ENCODE measurements at regions of chr6 and their contacts with region 1.

Region 1: GRCh38 chr6:132300323-132300949 is 100.8 kb downstream of the MOXD1 start:
- DNase-seq: peak; percentile 18 to 44
- H3K4me3 ChIP-seq: no peak overlapping the region
- H3K27ac ChIP-seq: no peak overlapping the region
- H3K4me1 ChIP-seq: no peaks in the 10 kb centered on the region
- H3K27me3 ChIP-seq: no peaks in the 10 kb centered on the region
- CTCF ChIP-seq: peak; percentile 90

Region 2: DNA sequence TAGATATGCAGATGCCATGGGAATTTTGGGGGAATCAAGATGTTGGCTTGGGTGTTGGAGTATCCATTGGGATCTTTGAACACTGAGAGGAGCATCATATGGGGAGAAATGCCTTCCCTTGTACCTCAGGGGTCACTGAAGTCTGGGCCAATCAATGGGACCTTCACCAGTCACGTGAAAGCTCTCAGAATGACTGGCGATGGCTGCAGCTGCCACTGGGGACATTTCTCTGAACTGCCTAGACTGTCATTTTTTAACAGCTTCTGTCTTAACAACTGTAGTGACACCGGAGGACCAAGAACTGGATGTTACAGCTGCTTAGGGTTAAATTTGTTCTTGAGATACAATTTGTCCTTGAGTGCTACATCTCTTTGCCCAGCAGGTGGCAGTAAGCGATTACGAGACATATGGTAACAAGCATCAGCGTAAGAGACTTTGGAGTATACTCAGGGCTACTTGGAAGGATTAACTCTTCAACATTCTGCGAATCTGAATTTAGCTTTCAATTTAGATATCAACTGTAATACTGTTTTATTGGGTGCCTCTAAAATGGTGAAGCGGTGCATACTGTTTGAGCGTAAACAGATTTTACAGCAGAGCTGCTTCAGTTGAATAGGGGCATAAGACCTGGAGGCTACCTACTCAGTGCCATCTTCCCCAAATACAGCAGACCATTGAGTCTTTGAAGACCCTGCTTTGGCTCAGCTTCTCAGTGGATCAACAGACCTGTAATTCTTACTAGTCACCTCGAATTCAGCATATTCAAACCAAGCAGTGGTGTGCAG is 385.3 kb before region 1 on chr6:
- CTCF ChIA-PET with region 1: interaction called, 4 read pairs
- POLR2A ChIA-PET with region 1: no interaction called
- intact Hi-C with region 1: loop called (anchors 2 kb)
- DNase-seq: peak; percentile 42 to 45
- H3K4me3 ChIP-seq: no peak overlapping the region
- H3K27ac ChIP-seq: no peak overlapping the region
- H3K4me1 ChIP-seq: no peaks in the 10 kb centered on the region
- H3K27me3 ChIP-seq: no peaks in the 10 kb centered on the region
- CTCF ChIP-seq: peak; percentile 96

Region 3: DNA sequence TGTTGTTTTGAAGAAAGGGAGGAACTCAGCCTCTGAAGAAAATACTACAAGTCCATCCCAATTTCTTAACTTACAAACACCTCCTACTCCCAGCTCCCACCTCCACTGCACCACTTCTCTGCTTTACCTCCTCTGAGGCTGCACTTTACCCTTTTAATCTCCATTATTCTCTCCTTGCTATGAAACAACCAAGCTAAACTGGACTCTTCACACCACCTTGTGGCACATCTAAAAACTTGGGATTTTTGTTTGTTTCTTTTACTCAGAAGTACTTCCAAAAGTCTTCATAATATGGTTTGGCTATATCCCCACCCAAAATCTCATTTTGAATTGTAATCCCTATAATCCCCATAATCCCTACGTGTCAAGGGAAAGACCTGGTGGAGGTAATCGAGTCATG is 41.4 kb before region 1 on chr6:
- CTCF ChIA-PET with region 1: no interaction called
- POLR2A ChIA-PET with region 1: no interaction called
- intact Hi-C with region 1: no loop called
- DNase-seq: peak in 1 of 2 experiments; percentile 28
- H3K4me3 ChIP-seq: no peak overlapping the region
- H3K27ac ChIP-seq: no peak overlapping the region
- H3K4me1 ChIP-seq: no peaks in the 10 kb centered on the region
- H3K27me3 ChIP-seq: no peaks in the 10 kb centered on the region
- CTCF ChIP-seq: peak; percentile 67

Region 4: GRCh38 chr6:132279592-132280139 is 20.8 kb before region 1 on chr6:
- CTCF ChIA-PET with region 1: interaction called, 9 read pairs
- POLR2A ChIA-PET with region 1: no interaction called
- intact Hi-C with region 1: loop called (anchors 1 kb)
- DNase-seq: peak; percentile 55 to 67
- H3K4me3 ChIP-seq: peak overlapping the region; percentile 56
- H3K27ac ChIP-seq: no peak overlapping the region
- H3K4me1 ChIP-seq: 0 out of 2 replicates have a peak, but pooled peaks cover 3% of the 10 kb centered on the region
- H3K27me3 ChIP-seq: no peaks in the 10 kb centered on the region
- CTCF ChIP-seq: peak; percentile 100

Region 5: DNA sequence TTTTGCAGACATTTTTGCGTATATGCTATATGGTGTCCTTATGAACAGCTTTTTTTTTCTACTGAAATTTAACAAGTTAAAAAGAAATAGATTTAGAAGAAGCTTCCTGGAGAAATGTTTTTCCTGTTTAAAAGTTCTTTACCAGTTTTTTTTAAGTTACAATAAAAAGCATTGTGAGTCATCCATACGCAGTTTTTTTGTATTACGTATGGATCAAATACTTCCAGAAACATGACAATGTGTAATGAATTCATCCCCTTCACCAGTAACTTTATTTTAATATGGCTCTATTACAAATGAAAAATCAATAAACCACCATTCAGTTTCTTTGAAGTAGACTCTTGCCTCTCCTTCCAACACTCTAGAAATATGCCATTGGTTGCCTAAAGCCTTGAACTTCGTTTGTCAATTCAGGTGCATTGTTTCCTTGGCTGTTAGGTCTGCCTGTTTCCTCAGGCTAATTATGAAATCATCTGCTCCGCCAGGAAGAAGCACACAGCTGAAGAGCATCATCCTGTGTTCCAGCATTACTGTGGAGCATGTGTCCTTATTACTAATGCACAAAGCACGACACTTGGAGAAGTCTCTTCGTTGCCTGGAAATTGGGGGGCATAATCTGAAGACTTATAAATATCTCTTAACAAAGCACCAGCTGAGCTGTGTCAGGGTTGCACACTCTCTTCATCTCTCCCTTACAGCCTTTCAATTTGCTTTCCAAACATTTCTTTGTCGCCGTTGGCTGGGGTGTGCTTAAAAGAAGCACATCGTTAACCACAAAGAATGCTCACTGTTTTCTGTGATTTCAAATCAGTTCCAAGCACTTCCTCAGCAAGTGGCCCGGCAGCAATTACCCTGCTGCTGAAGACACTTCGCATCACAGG is 91.2 kb after region 1 on chr6:
- CTCF ChIA-PET with region 1: no interaction called
- POLR2A ChIA-PET with region 1: no interaction called
- intact Hi-C with region 1: loop called (anchors 2 kb)
- DNase-seq: no peak
- H3K4me3 ChIP-seq: no peak overlapping the region
- H3K27ac ChIP-seq: no peak overlapping the region
- H3K4me1 ChIP-seq: no peaks in the 10 kb centered on the region
- H3K27me3 ChIP-seq: no peaks in the 10 kb centered on the region
- CTCF ChIP-seq: no peak

Measured in PC-9 (cell line).